Heart left ventricle (tissue), 16 donors: ENCODE measurements at regions of chr2 and their contacts with region 1.

Region 1: DNA sequence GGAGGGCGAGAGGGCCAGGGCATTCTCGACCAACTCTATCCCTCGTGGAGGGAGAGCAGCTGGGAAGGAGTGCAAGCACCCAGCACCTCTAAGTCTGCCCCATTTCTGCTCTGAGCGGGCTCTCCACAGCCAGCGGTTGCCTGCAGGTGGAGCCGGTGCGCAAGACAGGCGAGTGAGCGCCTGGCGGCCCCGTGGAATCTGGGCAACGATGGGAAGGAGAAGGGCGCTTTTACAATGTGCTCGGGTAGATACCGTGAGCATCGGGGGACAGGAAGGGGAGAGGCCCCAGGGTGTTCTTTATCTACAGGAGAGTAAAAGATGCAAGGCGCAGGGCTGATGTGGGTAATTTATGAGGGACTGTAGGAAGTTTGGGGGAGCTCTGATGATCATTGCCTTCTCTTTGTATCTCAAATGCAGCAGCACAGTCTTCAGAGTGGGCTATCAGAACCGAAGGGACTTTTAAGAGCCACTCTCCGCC is 867 bp upstream of the TTL start:
- DNase-seq: peak; percentile 83 to 92 (median 85)
- ATAC-seq: peak; percentile 85 to 93 (median 88)
- H3K4me3 ChIP-seq: peak overlapping the region; percentile 57 to 95 (median 72)
- H3K27ac ChIP-seq: peak overlapping the region; percentile 29 to 92 (median 88)
- H3K4me1 ChIP-seq: peaks cover 0 to 27% (median 19%) of the 10 kb centered on the region in 12 donors
- H3K27me3 ChIP-seq: no peaks in the 10 kb centered on the region
- CTCF ChIP-seq: peak; percentile 68 to 91 (median 78)
- POLR2A ChIP-seq: no peak

Region 2: GRCh38 chr2:111883661-111884591 is 597.2 kb before region 1 on chr2 and contains the start of gene ANAPC1:
- intact Hi-C with region 1: no loop called
- DNase-seq: peak; percentile 81 to 90 (median 88)
- ATAC-seq: peak; percentile 96 to 99 (median 98)
- H3K4me3 ChIP-seq: peak within 1 kb of the TSS; percentile 54 to 99 (median 97)
- H3K27ac ChIP-seq: peak within 1 kb of the TSS in 11 of 12 donors; percentile 58 to 90 (median 80)
- H3K4me1 ChIP-seq: peaks cover 0 to 20% (median 9%) of the 10 kb centered on the region in 12 donors
- H3K27me3 ChIP-seq: no peaks in the 10 kb centered on the region
- CTCF ChIP-seq: peak in 1 of 12 donors; percentile 3
- POLR2A ChIP-seq: peak in 1 of 2 donors; percentile 28
- total RNA-seq, gene ANAPC1: 12.2 to 30.7 (median 19.0) TPM

Region 3: DNA sequence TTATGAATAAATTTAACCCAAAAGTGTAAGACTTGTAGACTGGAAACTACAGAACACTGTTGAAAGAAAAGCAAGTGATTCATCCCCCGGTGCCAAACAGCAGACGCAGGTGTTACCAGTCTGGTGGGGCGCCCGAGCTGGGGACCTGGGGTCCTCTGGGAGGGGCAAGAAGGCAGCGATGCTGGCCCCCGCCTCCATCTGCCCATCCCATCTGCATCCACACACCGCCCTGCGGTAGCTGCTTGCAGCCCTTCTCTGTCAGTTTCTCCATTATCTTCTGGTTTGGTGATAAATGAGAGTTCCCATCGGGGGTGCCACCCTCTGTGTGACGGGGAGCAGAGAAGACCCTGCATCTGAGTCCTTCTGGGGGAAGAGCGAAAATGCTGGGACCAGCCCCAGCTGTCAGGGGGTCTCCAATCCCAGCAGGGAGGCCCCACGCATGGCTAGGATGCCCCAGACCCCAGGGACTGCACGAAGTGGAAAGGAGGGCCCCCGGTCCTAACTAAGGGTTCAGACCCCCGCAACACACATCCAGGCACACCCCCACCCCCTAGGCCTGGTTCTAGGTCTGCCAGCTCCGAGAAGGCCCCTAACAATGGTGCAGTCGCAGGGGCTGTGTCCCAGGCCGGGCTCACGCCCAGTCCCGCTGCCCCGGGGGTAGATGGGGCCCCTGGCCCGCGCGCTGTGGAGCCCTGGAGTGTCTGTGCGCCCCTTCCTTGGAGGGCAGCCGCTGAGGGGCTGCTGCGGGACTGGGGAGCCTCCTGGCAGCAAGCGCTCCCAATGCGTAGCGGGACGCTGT is 47.0 kb before region 1 on chr2:
- intact Hi-C with region 1: no loop called
- DNase-seq: no peak
- ATAC-seq: no peak
- H3K4me3 ChIP-seq: no peak overlapping the region
- H3K27ac ChIP-seq: no peak overlapping the region
- H3K4me1 ChIP-seq: peaks cover 0 to 10% (median 1%) of the 10 kb centered on the region in 12 donors
- H3K27me3 ChIP-seq: peaks cover 0 to 10% (median 0%) of the 10 kb centered on the region in 9 donors
- CTCF ChIP-seq: no peak
- POLR2A ChIP-seq: no peak

Region 4: DNA sequence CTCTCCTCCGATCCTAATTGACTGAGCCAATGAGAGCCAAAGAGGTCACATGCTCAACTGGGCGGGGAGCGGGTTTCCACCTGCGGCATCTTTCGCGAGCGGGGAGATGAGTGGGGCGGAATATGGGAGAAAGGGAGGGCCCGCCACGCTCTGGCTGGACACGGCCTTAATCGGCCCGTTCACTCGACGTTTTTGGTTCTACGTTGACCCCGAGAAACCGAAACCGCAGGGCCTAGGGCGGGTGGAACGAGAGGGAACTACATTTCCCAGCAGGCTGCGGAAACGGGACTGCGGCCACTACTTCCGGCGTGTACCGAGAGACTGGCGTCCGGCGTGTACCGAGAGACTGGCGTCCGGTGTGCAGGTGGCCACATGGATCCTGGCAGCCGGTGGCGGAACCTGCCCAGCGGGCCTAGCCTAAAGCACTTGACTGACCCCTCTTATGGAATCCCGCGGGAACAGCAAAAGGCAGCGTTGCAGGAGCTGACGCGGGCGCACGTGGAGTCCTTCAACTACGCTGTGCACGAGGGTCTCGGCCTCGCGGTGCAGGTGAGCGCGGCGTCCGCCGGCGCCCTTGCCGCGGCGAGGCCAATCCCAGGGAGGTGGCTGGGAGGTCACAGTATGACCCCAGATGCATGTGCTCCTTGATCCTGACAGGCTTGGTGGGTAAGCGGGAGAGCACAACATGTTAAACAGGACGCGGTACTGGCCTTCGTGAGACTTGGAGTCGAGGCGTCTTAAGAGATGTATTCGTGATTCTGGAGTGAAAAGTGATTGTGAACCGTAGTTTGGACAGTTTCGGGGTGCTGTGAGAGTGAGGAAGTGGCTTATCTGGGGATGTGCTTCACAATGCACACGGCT is 61.3 kb after region 1 on chr2 and contains the start of gene POLR1B:
- intact Hi-C with region 1: loop called in 7 of 10 experiments (anchors 1 to 10 kb)
- DNase-seq: peak; percentile 85 to 89 (median 87)
- ATAC-seq: peak; percentile 94 to 97 (median 96)
- H3K4me3 ChIP-seq: peak within 1 kb of the TSS; percentile 69 to 93 (median 81)
- H3K27ac ChIP-seq: peak within 1 kb of the TSS; percentile 71 to 93 (median 86)
- H3K4me1 ChIP-seq: peaks cover 0 to 24% (median 12%) of the 10 kb centered on the region in 12 donors
- H3K27me3 ChIP-seq: no peaks in the 10 kb centered on the region
- CTCF ChIP-seq: no peak
- POLR2A ChIP-seq: peak in 1 of 2 donors; percentile 28
- total RNA-seq, gene POLR1B: 6.0 to 15.5 (median 10.4) TPM

Region 5: DNA sequence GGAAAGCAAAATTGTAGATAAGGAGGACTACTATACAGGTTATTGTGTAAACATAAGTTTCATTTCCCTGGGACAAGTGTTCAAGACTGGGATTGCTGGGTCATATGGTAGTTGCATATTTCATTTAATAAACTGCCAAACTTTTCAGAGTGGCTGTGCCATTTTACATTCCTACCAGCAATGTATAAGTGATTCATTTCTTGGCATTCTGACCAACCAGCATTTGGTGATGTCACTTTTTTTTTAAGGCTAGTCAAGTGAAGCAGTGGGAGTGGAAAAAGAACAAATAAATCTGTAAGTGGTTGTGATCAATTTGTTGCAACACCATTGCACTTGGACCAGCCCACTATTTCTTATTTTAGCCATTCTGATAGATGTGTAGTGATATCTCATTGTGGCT is 98.2 kb after region 1 on chr2:
- intact Hi-C with region 1: loop called in 9 of 10 experiments (anchors 1 to 10 kb)
- DNase-seq: no peak
- ATAC-seq: no peak
- H3K4me3 ChIP-seq: no peak overlapping the region
- H3K27ac ChIP-seq: no peak overlapping the region
- H3K4me1 ChIP-seq: peaks cover 0 to 18% (median 7%) of the 10 kb centered on the region in 12 donors
- H3K27me3 ChIP-seq: no peaks in the 10 kb centered on the region
- CTCF ChIP-seq: no peak
- POLR2A ChIP-seq: no peak